WTC11 (cell line): ENCODE measurements at regions of chr13 and their contacts with region 1.

Region 1: DNA sequence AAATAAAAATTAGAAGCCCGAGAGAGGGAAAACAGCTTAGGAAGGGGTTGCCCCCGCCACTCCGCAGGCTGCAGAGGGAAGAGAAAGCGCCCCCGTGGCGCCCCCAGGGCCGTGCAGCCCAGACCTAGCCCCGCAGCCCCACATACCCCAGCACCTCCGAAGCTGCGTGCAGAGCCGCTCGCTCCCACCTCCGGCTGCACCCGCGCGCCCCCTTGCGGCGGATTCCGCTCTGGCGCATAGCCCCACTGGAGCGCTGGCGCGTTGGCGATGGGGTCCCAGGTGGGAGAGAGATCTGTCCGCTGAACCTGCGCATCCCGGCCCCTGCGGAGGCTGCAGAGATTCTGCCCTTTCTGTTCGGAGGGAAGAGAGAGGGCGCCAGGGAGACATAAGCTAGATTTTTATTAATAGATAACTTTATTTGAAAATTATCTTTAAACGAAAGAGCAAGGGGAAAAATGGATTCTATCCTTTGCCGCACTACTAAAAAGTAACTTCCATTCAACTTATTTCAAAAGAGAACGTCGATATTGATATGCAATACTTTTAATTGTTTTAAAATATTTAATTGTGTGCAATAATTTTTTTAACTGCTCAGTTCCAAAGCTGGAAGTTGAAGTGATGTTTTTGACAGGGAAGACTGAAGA is 11.7 kb upstream of the CLN5 start:
- DNase-seq: peak; percentile 96
- ATAC-seq: peak; percentile 99
- H3K4me3 Mint-ChIP-seq: 0 out of 2 replicates have a peak overlapping the region, but pooled peaks have one; percentile 27
- H3K27ac Mint-ChIP-seq: no peak overlapping the region
- H3K4me1 Mint-ChIP-seq: peaks cover 4% of the 10 kb centered on the region
- H3K27me3 Mint-ChIP-seq: peaks cover 9% of the 10 kb centered on the region
- CTCF ChIP-seq: peak; percentile 96

Region 2: DNA sequence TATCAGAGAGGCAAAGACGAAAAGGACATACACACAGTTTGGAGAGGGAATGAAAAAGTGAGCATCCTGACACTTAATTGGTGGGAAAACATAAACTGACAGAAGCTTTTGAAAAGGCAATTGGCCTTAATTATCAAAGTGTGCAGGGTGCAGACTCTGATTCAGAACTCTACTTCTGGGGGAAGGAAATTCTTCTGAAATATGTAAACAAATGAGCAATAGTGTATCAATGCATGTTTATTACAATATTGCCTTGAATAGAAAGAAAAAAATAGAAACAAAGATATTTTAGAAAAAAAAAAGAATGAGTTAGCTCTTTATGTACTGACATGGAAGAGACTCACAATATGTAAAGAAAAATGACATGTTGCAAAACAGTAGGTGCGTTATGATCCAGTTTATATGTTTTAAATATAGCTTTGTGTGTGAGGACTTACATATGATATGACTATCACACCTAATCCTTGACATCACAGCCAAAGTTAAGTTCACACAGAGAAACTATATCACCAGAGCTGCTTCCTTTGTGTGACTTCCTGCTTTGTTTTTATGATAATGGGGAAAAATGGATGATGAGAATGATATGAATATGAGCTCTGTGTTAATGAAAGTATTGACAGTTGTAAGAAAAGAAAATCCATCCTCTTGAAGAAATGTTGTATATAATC is 276.4 kb before region 1 on chr13:
- CTCF ChIA-PET with region 1: interaction called, 11 read pairs
- POLR2A ChIA-PET with region 1: no interaction called
- DNase-seq: no peak
- ATAC-seq: no peak
- H3K4me3 Mint-ChIP-seq: no peak overlapping the region
- H3K27ac Mint-ChIP-seq: no peak overlapping the region
- H3K4me1 Mint-ChIP-seq: no peaks in the 10 kb centered on the region
- H3K27me3 Mint-ChIP-seq: no peaks in the 10 kb centered on the region
- CTCF ChIP-seq: no peak

Region 3: DNA sequence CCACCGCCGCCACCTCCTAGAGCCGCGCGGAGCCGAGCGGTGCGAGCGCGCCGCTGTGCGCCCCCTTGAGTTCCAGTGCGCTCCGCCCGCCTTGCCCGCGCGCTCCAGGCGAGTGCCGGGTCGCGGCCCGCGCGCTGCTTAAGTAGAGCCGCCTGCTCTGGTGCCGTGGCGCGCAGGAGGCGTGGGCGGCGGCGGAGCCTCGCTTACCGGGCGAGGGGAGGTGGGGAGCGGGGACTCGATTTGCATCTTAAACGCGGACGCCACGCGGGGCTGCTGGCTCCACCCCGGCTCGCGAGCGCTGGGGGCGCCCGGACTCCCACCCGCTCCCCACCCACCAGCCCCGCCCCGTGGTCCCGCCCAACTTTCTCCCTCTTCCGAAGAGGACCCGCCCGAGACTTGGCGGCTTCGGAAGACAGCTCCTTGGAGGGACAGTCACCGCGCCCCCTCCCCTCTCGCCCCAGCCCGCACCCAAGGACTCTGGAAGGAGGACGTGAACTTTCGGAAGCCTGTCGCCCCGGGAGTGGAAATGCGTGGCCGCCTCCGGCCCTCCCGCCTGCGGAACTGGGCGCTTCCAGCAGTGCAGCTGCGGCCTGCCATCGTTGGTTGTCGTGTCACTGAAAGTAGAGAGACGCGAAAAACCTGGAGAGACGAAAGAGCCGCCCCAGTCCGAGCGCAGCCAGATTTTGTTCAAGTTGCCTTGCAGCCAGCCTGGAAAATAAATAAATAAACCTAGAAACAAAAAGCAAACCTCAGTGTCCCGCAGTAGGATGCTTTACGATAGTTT is 93.7 kb before region 1 on chr13 and contains the start of gene KCTD12:
- CTCF ChIA-PET with region 1: interaction called, 14 read pairs
- POLR2A ChIA-PET with region 1: no interaction called
- DNase-seq: peak; percentile 74
- ATAC-seq: peak; percentile 76
- H3K4me3 Mint-ChIP-seq: peak within 1 kb of the TSS; percentile 76
- H3K27ac Mint-ChIP-seq: no peak within 1 kb of the TSS
- H3K4me1 Mint-ChIP-seq: peaks cover 19% of the 10 kb centered on the region
- H3K27me3 Mint-ChIP-seq: peaks cover 66% of the 10 kb centered on the region
- CTCF ChIP-seq: no peak; the same call in 1 of the 2 replicates
- total RNA-seq, gene KCTD12: 6.7 to 8.0 TPM (median 7.8 TPM) in 3 replicates

Region 4: DNA sequence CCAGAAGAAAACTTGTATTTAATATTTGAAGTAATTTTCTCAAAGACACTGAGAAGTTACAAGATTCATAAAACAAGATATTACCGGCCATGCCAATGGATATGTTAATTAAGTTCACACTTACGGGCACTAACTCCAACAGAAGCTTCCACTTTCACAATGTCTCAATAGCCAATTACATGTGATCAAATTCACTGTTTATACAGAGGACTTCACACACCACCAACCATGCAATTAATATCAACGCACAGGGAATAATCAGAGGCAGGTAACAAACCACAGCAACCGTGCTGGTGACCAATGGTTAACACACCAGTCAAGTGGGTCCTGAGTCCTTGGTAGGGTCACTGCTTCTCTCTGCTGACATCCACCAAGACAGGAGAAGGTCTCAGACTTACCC is 37.8 kb before region 1 on chr13:
- CTCF ChIA-PET with region 1: no interaction called
- POLR2A ChIA-PET with region 1: no interaction called
- DNase-seq: no peak
- ATAC-seq: no peak
- H3K4me3 Mint-ChIP-seq: no peak overlapping the region
- H3K27ac Mint-ChIP-seq: no peak overlapping the region
- H3K4me1 Mint-ChIP-seq: no peaks in the 10 kb centered on the region
- H3K27me3 Mint-ChIP-seq: no peaks in the 10 kb centered on the region; the same call in 1 of the 2 replicates
- CTCF ChIP-seq: no peak

Region 5: GRCh38 chr13:76991796-76992547 is 11.8 kb after region 1 on chr13 and contains the start of gene CLN5:
- CTCF ChIA-PET with region 1: interaction called, 19 read pairs
- POLR2A ChIA-PET with region 1: no interaction called
- DNase-seq: peak; percentile 93
- ATAC-seq: peak; percentile 96
- H3K4me3 Mint-ChIP-seq: peak within 1 kb of the TSS; percentile 99
- H3K27ac Mint-ChIP-seq: peak within 1 kb of the TSS; percentile 97
- H3K4me1 Mint-ChIP-seq: peaks cover 17% of the 10 kb centered on the region
- H3K27me3 Mint-ChIP-seq: peaks cover 8% of the 10 kb centered on the region; the same call in 1 of the 2 replicates
- CTCF ChIP-seq: no peak
- total RNA-seq, gene CLN5: 9.2 to 11.9 TPM (median 9.3 TPM) in 3 replicates

Region 6: GRCh38 chr13:77002590-77003190 is 22.5 kb after region 1 on chr13:
- CTCF ChIA-PET with region 1: interaction called, 12 read pairs
- POLR2A ChIA-PET with region 1: no interaction called
- DNase-seq: no peak
- ATAC-seq: peak; percentile 56
- H3K4me3 Mint-ChIP-seq: no peak overlapping the region
- H3K27ac Mint-ChIP-seq: no peak overlapping the region
- H3K4me1 Mint-ChIP-seq: peaks cover 3% of the 10 kb centered on the region; the same call in 1 of the 2 replicates
- H3K27me3 Mint-ChIP-seq: no peaks in the 10 kb centered on the region
- CTCF ChIP-seq: peak; percentile 34